Activated B cell treated with CpG ODN at 0.5 μM for 24 hours (primary cell): ENCODE measurements at regions of chr16 and their contacts with region 1.

Region 1: GRCh38 chr16:12819126-12820117 is 15.7 kb upstream of the CPPED1 start:
- DNase-seq: peak; percentile 64
- ATAC-seq: peak; percentile 81
- H3K4me3 Mint-ChIP-seq: no peak overlapping the region
- H3K27ac Mint-ChIP-seq: no peak overlapping the region
- H3K4me1 Mint-ChIP-seq: peaks cover 3% of the 10 kb centered on the region
- H3K27me3 Mint-ChIP-seq: peaks cover 9% of the 10 kb centered on the region
- CTCF ChIP-seq: peak; percentile 92

Region 2: GRCh38 chr16:12228602-12229499 is 590.6 kb before region 1 on chr16:
- CTCF ChIA-PET with region 1: no interaction called
- POLR2A ChIA-PET with region 1: no interaction called
- intact Hi-C with region 1: loop called (anchors 1 kb)
- DNase-seq: peak; percentile 20
- ATAC-seq: peak; percentile 49
- H3K4me3 Mint-ChIP-seq: no peak overlapping the region
- H3K27ac Mint-ChIP-seq: peak overlapping the region; percentile 38
- H3K4me1 Mint-ChIP-seq: peaks cover 38% of the 10 kb centered on the region
- H3K27me3 Mint-ChIP-seq: no peaks in the 10 kb centered on the region
- CTCF ChIP-seq: no peak

Region 3: GRCh38 chr16:12455287-12455798 is 364.1 kb before region 1 on chr16:
- CTCF ChIA-PET with region 1: interaction called, 9 read pairs
- POLR2A ChIA-PET with region 1: interaction called, 6 read pairs
- intact Hi-C with region 1: loop called (anchors 1 kb)
- DNase-seq: peak; percentile 24
- ATAC-seq: no peak
- H3K4me3 Mint-ChIP-seq: no peak overlapping the region
- H3K27ac Mint-ChIP-seq: peak overlapping the region; percentile 8
- H3K4me1 Mint-ChIP-seq: peaks cover 48% of the 10 kb centered on the region
- H3K27me3 Mint-ChIP-seq: no peaks in the 10 kb centered on the region
- CTCF ChIP-seq: peak; percentile 24

Region 4: GRCh38 chr16:12573730-12574383 is 245.6 kb before region 1 on chr16:
- CTCF ChIA-PET with region 1: no interaction called
- POLR2A ChIA-PET with region 1: no interaction called
- intact Hi-C with region 1: loop called (anchors 5 kb)
- DNase-seq: no peak
- ATAC-seq: no peak
- H3K4me3 Mint-ChIP-seq: no peak overlapping the region
- H3K27ac Mint-ChIP-seq: no peak overlapping the region
- H3K4me1 Mint-ChIP-seq: peaks cover 30% of the 10 kb centered on the region
- H3K27me3 Mint-ChIP-seq: no peaks in the 10 kb centered on the region
- CTCF ChIP-seq: no peak

Region 5: GRCh38 chr16:12721841-12722421 is 97.5 kb before region 1 on chr16:
- CTCF ChIA-PET with region 1: no interaction called
- POLR2A ChIA-PET with region 1: no interaction called
- intact Hi-C with region 1: no loop called
- DNase-seq: no peak
- ATAC-seq: no peak
- H3K4me3 Mint-ChIP-seq: no peak overlapping the region
- H3K27ac Mint-ChIP-seq: no peak overlapping the region
- H3K4me1 Mint-ChIP-seq: peaks cover 6% of the 10 kb centered on the region
- H3K27me3 Mint-ChIP-seq: no peaks in the 10 kb centered on the region
- CTCF ChIP-seq: no peak